CD4-positive, alpha-beta memory T cell (primary cell): ENCODE measurements at regions of chr17 and their contacts with region 1.

Region 1: DNA sequence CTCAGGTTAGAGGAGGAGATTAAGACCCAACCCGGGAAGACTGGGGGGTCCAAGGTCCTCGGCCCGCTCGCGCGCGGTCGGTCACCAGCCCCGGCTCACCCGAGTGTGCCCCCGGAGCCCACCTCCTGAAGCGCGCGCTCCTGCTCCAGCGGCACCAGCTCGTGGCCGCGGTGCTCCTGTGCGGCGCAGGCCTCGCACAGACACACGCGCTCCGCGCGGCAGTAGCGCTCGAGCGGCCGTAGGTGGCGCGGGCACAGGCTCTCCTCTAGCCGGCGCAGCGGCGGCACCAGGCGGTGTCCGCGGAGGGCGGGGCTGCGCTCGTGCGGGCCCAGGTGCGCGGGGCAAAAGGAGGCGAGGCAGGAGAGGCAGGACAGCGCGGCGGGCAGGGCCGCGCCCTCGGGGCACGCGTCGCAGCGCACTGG is 618 bp downstream of the TRIM47 start:
- DNase-seq: peak; percentile 71 to 76 (median 75)
- H3K4me3 ChIP-seq: peak overlapping the region; percentile 61 to 76
- H3K4me3 Mint-ChIP-seq: peak overlapping the region; percentile 89 to 95 (median 91)
- H3K27ac ChIP-seq: peak overlapping the region; percentile 56
- H3K27ac Mint-ChIP-seq: peak overlapping the region; percentile 88 to 97 (median 94)
- H3K4me1 ChIP-seq: peaks cover 64% of the 10 kb centered on the region
- H3K4me1 Mint-ChIP-seq: peaks cover 26 to 62% (median 45%) of the 10 kb centered on the region in 4 donors
- H3K27me3 ChIP-seq: no peaks in the 10 kb centered on the region
- H3K27me3 Mint-ChIP-seq: no peaks in the 10 kb centered on the region

Region 2: GRCh38 chr17:75601057-75602051 is 276.4 kb before region 1 on chr17:
- CTCF ChIA-PET with region 1: no interaction called
- POLR2A ChIA-PET with region 1: no interaction called
- intact Hi-C with region 1: no loop called
- DNase-seq: peak; percentile 41 to 62 (median 46)
- H3K4me3 ChIP-seq: no peak overlapping the region
- H3K4me3 Mint-ChIP-seq: no peak overlapping the region
- H3K27ac ChIP-seq: no peak overlapping the region
- H3K27ac Mint-ChIP-seq: peak overlapping the region in 1 of 7 donors; percentile 30
- H3K4me1 ChIP-seq: no peaks in the 10 kb centered on the region
- H3K4me1 Mint-ChIP-seq: peaks cover 0 to 3% (median 0%) of the 10 kb centered on the region in 4 donors
- H3K27me3 ChIP-seq: no peaks in the 10 kb centered on the region
- H3K27me3 Mint-ChIP-seq: no peaks in the 10 kb centered on the region

Region 3: DNA sequence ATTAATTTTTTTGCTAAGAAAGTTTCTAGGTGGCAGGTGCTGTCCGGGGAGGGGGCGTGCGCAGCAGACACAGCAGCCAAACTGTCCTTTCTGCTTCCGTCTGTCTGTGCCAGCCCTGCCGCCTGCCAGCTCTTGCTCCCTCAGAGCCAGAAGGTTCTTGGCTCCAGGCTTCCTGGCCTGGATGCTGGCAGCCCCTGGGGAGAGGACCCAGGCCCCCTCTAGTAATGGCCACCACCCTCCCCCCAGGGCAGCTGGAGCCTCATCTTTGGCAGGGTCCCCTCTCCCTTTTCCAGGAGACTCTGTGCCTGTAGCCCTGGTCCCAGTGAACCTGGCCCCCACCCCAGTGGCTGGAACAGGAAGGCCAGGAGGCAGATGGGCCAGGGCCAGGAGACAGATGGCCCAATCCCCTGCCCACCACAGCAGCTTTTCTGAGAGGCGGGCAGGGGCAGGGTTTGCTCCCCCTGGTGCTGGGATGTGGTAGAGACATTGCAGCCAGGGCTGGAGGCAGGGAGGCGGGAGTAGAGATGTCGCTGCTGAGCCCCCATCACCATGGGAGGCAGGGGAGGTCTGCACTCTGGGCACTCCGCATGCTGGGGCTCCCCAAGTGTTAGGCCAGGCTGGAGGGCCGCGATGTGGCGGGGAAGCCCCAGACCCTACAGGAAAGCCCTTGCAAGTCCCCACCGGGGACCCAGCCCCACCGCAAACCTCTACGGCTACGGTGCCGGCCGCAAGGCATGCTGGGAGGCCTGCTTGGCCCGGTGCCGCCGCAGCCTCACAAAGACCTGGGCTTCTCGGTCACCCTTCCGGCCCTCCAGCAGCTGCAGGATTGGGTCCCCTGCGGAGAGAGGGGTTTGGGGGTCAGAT is 50.3 kb before region 1 on chr17:
- CTCF ChIA-PET with region 1: interaction called, 10 read pairs
- POLR2A ChIA-PET with region 1: interaction called, 6 read pairs
- intact Hi-C with region 1: no loop called
- DNase-seq: peak; percentile 55 to 80 (median 71)
- H3K4me3 ChIP-seq: no peak overlapping the region
- H3K4me3 Mint-ChIP-seq: peak overlapping the region; percentile 17 to 73 (median 56)
- H3K27ac ChIP-seq: peak overlapping the region; percentile 59
- H3K27ac Mint-ChIP-seq: peak overlapping the region; percentile 66 to 91 (median 83)
- H3K4me1 ChIP-seq: peaks cover 26% of the 10 kb centered on the region
- H3K4me1 Mint-ChIP-seq: peaks cover 5 to 24% (median 14%) of the 10 kb centered on the region in 4 donors
- H3K27me3 ChIP-seq: no peaks in the 10 kb centered on the region
- H3K27me3 Mint-ChIP-seq: no peaks in the 10 kb centered on the region

Region 4: GRCh38 chr17:76103274-76104139 is 225.7 kb after region 1 on chr17 and contains the start of gene EXOC7:
- CTCF ChIA-PET with region 1: no interaction called
- POLR2A ChIA-PET with region 1: no interaction called
- intact Hi-C with region 1: no loop called
- DNase-seq: peak; percentile 88 to 95 (median 92)
- H3K4me3 ChIP-seq: peak within 1 kb of the TSS; percentile 84 to 86
- H3K4me3 Mint-ChIP-seq: peak within 1 kb of the TSS; percentile 92 to 98 (median 96)
- H3K27ac ChIP-seq: peak within 1 kb of the TSS; percentile 86
- H3K27ac Mint-ChIP-seq: peak within 1 kb of the TSS; percentile 95 to 99 (median 97)
- H3K4me1 ChIP-seq: peaks cover 27% of the 10 kb centered on the region
- H3K4me1 Mint-ChIP-seq: peaks cover 20 to 49% (median 33%) of the 10 kb centered on the region in 4 donors
- H3K27me3 ChIP-seq: no peaks in the 10 kb centered on the region
- H3K27me3 Mint-ChIP-seq: no peaks in the 10 kb centered on the region
- total RNA-seq, gene EXOC7: 183 to 184 TPM